ENCODE measurements at regions of chr14 and their contacts with region 1.

Region 1: GRCh38 chr14:96100161-96101029 is 61.2 kb downstream of the C14orf132 start:
- DNase-seq: peak; percentile 92
- ATAC-seq: peak; percentile 73
- H3K4me3 Mint-ChIP-seq: no peak overlapping the region
- H3K27ac Mint-ChIP-seq: no peak overlapping the region
- H3K4me1 Mint-ChIP-seq: peaks cover 14% of the 10 kb centered on the region
- H3K27me3 Mint-ChIP-seq: no peaks in the 10 kb centered on the region
- CTCF ChIP-seq: peak; percentile 65

Region 2: GRCh38 chr14:95895720-95896119 is 204.7 kb before region 1 on chr14:
- CTCF ChIA-PET with region 1: interaction called, 10 read pairs
- POLR2A ChIA-PET with region 1: no interaction called
- DNase-seq: peak; percentile 68
- ATAC-seq: peak; percentile 81
- H3K4me3 Mint-ChIP-seq: no peak overlapping the region
- H3K27ac Mint-ChIP-seq: no peak overlapping the region; the same call in 1 of the 2 replicates
- H3K4me1 Mint-ChIP-seq: peaks cover 57% of the 10 kb centered on the region
- H3K27me3 Mint-ChIP-seq: no peaks in the 10 kb centered on the region
- CTCF ChIP-seq: peak; percentile 45; the same call in 1 of the 2 replicates

Region 3: DNA sequence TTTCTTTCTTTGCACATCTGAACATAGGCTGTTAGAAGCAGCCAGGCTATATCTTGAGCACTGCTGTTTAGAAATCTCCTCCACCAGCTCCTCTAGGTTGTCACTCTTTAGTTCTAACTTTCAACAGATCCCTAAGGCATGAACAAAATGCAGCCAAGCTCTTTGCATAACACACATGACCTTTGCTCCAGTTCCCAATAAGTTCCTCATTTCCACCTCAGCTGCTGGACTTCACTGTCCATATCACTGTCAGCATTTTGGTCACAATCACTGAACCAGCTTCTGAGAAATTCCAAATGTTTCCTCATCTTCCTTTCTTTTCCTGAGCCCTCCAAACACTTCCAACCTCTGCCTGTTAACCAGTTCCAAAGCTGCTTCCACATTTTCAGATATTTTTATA is 88.8 kb before region 1 on chr14:
- CTCF ChIA-PET with region 1: interaction called, 16 read pairs
- POLR2A ChIA-PET with region 1: no interaction called
- DNase-seq: no peak
- ATAC-seq: no peak
- H3K4me3 Mint-ChIP-seq: no peak overlapping the region
- H3K27ac Mint-ChIP-seq: no peak overlapping the region
- H3K4me1 Mint-ChIP-seq: no peaks in the 10 kb centered on the region
- H3K27me3 Mint-ChIP-seq: peaks cover 14% of the 10 kb centered on the region
- CTCF ChIP-seq: no peak

Region 4: DNA sequence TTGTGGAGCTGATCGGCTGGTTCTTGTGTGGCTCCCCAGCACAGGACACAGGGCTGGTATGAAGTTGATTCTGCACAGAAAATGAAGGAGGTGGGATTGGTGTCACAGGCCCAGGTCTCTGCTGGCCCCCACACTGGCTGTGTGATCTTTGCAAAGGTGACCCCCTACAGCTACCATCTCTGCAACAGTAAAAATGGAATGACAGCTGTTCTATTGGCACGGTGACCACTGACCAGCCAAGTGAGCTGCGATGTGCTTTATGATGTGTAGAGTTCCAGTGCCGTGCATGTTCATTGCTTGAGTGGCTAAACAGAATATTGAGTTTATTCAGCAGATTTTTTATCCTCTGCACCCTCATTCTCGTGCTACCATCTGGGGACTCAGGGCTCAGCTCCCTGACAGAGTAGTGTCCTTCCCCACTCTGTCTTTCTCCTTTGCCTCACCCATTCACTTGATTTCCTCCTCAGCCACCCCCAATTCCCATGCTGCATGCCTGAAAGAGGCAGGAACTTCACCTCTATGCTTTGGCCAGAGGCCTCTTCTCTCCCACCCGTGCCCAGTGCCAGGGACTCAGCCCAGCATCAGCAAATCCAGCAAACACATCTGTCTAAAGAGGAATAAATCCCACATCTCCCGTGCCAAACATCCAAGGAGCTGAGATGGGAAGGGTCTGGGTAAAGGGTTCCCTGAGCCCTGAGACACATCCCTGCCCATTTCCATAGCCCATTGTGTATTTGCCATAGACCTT is 40.0 kb before region 1 on chr14:
- CTCF ChIA-PET with region 1: interaction called, 61 read pairs
- POLR2A ChIA-PET with region 1: interaction called, 4 read pairs
- DNase-seq: no peak
- ATAC-seq: no peak
- H3K4me3 Mint-ChIP-seq: no peak overlapping the region
- H3K27ac Mint-ChIP-seq: no peak overlapping the region
- H3K4me1 Mint-ChIP-seq: peaks cover 4% of the 10 kb centered on the region; the same call in 1 of the 2 replicates
- H3K27me3 Mint-ChIP-seq: no peaks in the 10 kb centered on the region
- CTCF ChIP-seq: no peak

Region 5: DNA sequence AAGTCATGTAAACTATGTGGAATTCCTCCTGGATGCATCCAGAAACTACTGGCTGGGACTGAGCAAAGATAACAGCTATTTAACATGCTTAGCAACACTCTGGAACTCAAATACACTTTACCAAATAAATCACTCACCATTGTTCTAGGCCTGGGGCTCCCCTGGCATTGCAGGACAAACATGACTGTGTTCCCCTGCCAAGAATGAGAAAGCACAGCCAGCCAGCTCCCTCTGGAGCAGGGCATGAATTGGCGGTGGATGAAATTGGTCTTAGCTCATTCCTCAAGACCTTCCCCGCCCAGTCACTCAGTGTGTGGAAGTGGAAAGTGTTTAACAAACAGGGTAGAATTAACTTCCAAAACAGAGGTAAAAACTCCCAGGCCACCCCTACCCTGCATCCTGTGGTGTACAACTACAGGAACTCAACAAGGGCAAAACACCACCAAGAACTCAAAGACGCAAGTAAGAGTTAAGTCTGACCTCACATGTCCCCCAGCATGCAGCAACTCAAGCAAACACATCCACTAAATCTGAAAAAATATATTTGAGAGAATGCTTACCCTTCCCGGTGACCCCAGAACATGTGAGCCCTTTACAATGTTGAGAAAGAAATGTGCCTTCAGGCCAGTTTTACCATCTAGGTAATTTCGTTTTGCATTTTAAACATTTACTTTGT is 45.9 kb after region 1 on chr14:
- CTCF ChIA-PET with region 1: interaction called, 11 read pairs
- POLR2A ChIA-PET with region 1: no interaction called
- DNase-seq: no peak
- ATAC-seq: no peak
- H3K4me3 Mint-ChIP-seq: no peak overlapping the region
- H3K27ac Mint-ChIP-seq: no peak overlapping the region
- H3K4me1 Mint-ChIP-seq: no peaks in the 10 kb centered on the region
- H3K27me3 Mint-ChIP-seq: no peaks in the 10 kb centered on the region; the same call in 1 of the 2 replicates
- CTCF ChIP-seq: no peak

Region 6: DNA sequence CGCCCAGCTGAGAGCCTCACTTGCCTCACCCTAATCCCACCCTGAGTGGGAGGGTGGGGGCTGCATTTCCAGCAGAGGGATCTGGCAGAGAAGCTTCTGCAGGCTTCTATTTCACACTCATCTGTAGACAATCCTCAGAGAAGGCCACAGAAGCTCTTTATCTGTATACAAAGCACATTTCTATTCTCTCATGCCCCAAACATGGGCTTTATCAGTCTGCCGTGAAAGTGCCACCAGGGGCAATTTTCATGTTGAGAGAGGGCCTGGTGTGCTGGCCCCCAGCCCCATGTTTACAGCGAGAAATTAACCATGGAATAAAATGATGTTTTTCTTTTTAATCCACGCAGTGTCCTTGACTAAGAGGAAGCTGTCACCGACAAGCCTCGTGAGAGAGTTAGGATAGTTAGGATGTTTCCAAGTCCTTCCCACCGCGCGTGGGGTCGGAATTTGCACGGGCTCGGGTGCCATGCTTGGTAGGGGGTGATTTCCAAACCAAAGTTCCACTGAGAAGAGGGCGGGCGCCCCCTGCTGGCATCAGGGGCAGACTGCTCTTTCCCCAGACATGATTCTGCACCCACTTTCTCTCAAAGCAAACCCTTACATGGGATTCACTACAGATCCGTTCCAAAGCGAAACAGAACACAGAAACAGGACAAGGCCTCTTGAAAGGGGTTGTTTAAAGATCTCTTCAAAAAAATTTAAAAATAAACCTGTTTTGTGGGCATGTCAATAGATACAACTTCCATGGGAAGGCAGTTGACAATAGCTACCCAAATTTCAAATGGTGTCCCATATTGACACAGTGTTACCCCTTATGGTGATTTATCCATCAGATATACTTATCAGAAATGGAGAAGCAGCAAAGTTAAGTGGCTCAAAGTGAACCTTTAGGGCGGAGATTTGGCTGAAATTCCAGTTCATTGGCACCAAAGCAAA is 175.1 kb after region 1 on chr14:
- CTCF ChIA-PET with region 1: interaction called, 94 read pairs
- POLR2A ChIA-PET with region 1: no interaction called
- DNase-seq: peak; percentile 81
- ATAC-seq: peak; percentile 78
- H3K4me3 Mint-ChIP-seq: peak overlapping the region; percentile 18; the same call in 1 of the 2 replicates
- H3K27ac Mint-ChIP-seq: no peak overlapping the region
- H3K4me1 Mint-ChIP-seq: peaks cover 18% of the 10 kb centered on the region
- H3K27me3 Mint-ChIP-seq: no peaks in the 10 kb centered on the region; the same call in 1 of the 2 replicates
- CTCF ChIP-seq: peak; percentile 98

Region 7: DNA sequence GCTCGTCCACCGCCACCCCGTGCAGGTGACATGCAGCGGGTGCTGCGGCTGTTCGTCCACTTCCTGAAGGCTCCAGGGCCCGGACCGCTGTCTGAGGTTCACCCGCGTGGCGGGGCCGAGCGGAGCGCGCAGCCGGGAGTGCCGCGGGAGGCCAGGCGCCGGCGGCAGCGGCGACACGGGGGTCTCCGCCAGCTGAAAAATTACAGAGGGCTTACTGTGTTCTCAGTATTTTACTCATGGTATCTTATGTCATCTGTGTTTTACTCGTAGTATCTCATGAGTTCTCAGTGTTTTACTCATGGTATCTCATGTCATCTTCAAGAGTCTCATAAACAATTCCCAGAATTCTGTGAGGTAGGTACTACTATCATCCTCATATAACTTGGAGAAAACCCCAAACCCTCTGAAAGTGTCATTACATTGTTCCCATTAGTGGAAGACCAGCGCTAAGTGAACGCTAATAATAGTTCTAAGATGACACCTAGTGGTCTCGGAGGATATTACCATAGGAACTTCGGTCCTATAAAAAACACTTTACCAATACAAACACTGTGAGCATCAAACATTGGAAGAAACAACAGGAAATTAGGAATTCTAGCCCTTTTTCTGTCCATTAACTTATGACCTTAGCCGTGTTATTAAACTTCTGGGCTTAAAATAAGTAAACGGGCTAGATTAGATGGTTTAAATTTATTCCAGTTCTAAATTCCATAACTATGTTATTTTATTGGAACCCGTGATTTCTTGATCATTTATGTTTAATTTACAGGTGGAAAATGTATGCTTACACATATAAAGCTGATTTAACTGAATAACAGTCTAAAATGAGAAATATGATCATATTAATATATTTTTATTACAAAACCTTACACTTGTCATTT is 324.0 kb after region 1 on chr14:
- CTCF ChIA-PET with region 1: interaction called, 10 read pairs
- POLR2A ChIA-PET with region 1: no interaction called
- DNase-seq: no peak
- ATAC-seq: peak; percentile 83
- H3K4me3 Mint-ChIP-seq: peak overlapping the region; percentile 50
- H3K27ac Mint-ChIP-seq: no peak overlapping the region
- H3K4me1 Mint-ChIP-seq: no peaks in the 10 kb centered on the region
- H3K27me3 Mint-ChIP-seq: no peaks in the 10 kb centered on the region
- CTCF ChIP-seq: peak; percentile 78